HEK293 (cell line): ENCODE measurements at regions of chr11 and their contacts with region 1.

Region 1: DNA sequence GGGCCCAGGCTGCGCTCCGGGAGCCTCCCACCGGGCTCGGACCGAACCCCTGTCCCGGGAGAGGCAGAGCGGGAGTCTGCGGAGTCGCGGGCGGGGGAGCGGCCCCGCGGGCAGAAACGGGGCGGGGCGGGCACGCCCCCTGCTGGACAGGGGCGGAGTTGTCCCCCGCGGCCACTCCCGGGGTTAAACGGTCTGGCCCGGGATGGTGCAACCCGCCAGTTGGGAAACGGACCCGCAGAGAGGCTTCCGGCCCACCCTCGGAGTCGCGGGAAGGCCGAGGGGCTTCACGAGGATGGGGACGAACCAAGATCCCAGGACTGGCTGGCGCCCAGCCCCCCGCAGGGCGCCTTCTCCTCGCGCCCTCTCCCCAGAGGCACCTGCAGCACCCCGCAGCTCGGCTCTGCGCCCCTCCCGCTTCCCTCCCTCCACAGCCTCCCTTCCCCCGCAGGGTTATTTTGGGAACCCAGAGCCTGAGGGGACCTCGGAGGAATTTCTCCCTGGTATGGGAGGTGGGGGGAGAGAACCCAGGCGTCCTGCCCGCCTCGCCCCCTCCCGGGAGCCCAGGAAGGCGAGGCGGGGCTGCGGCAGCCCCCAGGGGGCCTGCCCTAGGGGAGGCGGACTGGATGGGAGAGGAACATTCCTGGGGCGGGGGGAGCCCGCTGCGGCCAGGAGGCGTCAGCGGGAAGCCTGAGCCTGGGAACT is 902 bp downstream of the RASGRP2 start:
- H3K4me3 ChIP-seq: peak overlapping the region; percentile 30
- H3K27ac ChIP-seq: no peak overlapping the region
- H3K4me1 ChIP-seq: no peaks in the 10 kb centered on the region
- CTCF ChIP-seq: peak; percentile 84

Region 2: DNA sequence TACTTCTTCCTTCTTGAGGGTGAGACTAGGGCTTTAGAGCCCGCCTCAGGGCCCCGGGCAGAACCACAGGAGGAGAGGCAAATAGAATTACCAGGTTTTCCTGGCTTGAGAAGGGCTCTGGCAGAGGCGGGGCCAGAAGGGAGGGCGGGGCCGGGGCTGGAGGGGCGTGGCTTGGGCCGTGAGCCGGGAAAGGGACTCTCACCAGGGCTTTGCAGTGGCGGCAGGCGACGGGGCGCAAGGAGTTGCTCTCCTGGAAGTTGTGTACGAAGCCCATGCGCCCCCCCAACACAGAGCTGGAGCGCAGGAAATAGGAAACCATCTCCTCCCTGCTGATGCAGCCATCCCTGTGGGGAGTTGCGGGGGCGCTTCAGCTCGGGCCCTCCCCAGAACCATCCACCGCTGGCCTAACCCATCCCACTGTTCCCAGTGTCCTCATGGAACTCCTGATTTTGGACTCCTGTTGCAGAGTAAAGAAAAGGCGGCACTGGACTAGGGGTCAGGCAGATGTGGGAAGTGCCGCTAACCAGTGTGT is 13.1 kb before region 1 on chr11:
- CTCF ChIA-PET with region 1: interaction called, 15 read pairs
- POLR2A ChIA-PET with region 1: no interaction called
- H3K4me3 ChIP-seq: no peak overlapping the region
- H3K27ac ChIP-seq: no peak overlapping the region
- H3K4me1 ChIP-seq: no peaks in the 10 kb centered on the region
- CTCF ChIP-seq: no peak

Region 3: DNA sequence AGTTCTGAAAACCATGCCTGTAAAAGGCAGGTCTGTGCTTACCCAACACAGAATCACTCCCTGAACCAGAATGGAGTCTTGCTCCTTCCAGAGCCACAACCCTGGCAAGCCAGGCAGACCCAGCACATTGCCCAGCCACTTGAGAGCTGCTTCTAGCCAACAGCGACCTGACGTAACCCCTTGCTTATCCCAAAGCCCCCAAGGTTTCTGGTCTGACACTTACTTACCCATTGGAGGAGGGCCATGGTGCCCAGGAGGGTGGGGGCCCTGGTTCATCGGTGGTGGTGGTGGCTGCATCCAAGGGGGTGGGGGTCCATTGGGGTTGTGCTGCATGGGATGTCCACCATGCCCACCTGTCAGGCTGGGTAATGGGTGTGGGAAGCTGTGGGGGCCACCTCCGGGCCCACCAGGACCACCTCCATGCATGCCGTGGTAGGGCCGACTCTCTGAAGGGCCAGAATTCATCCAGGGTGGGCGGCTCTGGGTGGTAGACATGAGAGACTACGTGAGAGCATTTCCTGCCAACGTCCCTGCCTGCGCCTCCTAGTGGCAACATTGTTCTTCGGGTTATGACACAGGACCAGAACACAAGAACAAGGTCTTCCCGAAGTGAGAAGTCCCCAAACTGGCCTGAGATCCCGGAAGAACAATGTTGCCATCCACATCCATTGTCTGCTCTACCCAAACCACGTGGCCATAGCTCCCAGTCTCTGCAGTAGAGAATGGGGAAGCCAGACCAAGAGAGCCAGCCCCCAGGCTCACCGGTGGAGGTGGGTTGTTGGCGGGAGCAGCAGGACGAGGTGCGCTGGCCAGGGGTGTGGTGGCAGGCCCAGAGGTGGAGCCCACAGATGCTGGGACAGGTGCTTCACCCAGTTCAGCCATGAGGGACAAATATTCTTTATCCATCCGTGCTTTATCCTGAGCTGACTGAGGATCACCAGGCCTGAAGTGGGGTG is 24.6 kb after region 1 on chr11:
- CTCF ChIA-PET with region 1: interaction called, 22 read pairs
- POLR2A ChIA-PET with region 1: interaction called, 4 read pairs
- H3K4me3 ChIP-seq: no peak overlapping the region
- H3K27ac ChIP-seq: no peak overlapping the region
- H3K4me1 ChIP-seq: peaks cover 7% of the 10 kb centered on the region
- CTCF ChIP-seq: peak; percentile 56